Aorta (tissue), 5 donors: ENCODE measurements at regions of chr19 and their contacts with region 1.

Region 1: DNA sequence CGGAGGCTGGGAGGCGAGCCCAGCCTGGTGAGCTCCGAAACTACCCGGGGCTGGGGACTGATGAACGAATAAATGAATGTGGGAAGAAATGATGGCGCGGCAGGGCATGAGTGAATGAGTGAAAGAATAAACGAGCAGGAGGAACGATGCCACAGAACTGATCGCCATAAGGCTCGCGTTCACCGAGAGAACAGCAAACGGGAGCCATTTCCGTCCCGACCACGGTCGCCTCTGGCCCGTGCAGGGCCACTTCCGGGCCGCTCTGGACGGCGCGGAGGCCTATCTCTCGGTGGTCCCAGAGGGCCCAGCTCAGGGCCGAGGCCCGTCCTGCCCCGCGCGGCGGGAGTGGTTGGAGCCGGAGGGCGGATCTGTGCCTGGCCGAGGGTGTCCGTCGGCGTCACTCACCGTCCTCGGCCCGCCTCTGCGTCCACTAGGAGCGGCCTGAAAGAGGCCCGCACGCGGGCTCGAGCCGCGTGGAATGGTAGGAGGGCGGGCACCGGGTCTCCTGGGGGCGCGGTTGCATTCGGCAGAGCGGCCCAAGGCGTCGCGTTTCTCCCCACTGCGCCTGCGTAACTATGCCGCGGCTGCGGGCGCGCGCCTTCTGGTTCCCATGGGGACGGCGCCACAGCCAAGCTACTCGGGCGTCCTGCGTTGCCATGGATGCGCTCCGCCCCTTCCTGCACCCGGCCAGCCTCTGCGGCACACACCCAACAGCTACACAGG is at the start of gene ZNF497:
- DNase-seq: peak; percentile 98 to 99
- ATAC-seq: peak; percentile 97
- H3K4me3 ChIP-seq: peak within 1 kb of the TSS; percentile 42 to 67
- H3K27ac ChIP-seq: peak within 1 kb of the TSS in 1 of 2 donors; percentile 84
- H3K4me1 ChIP-seq: no peaks in the 10 kb centered on the region
- H3K27me3 ChIP-seq: no peaks in the 10 kb centered on the region
- total RNA-seq, gene ZNF497: 0.32 to 0.87 TPM

Region 2: DNA sequence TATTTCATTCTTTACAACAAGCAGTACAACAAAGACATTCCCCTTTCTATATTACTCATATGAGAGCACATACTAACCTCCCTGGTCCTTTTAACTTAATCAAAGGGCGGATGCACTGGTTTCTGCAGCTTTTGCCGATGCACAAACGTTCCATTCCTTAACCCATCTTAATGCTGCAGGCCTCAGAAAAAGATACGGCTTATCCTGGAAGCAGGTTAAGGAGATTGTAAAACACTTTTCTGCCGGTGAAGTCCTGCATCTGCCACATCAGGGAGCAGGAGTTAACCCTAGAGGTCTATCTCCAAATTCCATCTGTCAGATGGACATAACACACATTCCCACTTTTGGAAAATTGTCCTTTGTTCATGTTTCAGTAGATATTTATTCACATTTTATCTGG is 462.1 kb before region 1 on chr19:
- intact Hi-C with region 1: no loop called
- DNase-seq: no peak
- ATAC-seq: no peak
- H3K4me3 ChIP-seq: no peak overlapping the region
- H3K27ac ChIP-seq: no peak overlapping the region
- H3K4me1 ChIP-seq: no peaks in the 10 kb centered on the region
- H3K27me3 ChIP-seq: no peaks in the 10 kb centered on the region

Region 3: GRCh38 chr19:58380722-58381466 is 18.5 kb after region 1 on chr19 and contains the start of gene ZNF837:
- intact Hi-C with region 1: loop called in 1 of 2 experiments (anchors 1 kb)
- DNase-seq: peak; percentile 99 to 100
- ATAC-seq: peak; percentile 98
- H3K4me3 ChIP-seq: peak within 1 kb of the TSS; percentile 44 to 45
- H3K27ac ChIP-seq: peak within 1 kb of the TSS in 1 of 2 donors; percentile 91
- H3K4me1 ChIP-seq: peaks cover 0 to 3% of the 10 kb centered on the region in 2 donors
- H3K27me3 ChIP-seq: no peaks in the 10 kb centered on the region
- total RNA-seq, gene ZNF837: 0.65 to 1.8 TPM

Region 4: DNA sequence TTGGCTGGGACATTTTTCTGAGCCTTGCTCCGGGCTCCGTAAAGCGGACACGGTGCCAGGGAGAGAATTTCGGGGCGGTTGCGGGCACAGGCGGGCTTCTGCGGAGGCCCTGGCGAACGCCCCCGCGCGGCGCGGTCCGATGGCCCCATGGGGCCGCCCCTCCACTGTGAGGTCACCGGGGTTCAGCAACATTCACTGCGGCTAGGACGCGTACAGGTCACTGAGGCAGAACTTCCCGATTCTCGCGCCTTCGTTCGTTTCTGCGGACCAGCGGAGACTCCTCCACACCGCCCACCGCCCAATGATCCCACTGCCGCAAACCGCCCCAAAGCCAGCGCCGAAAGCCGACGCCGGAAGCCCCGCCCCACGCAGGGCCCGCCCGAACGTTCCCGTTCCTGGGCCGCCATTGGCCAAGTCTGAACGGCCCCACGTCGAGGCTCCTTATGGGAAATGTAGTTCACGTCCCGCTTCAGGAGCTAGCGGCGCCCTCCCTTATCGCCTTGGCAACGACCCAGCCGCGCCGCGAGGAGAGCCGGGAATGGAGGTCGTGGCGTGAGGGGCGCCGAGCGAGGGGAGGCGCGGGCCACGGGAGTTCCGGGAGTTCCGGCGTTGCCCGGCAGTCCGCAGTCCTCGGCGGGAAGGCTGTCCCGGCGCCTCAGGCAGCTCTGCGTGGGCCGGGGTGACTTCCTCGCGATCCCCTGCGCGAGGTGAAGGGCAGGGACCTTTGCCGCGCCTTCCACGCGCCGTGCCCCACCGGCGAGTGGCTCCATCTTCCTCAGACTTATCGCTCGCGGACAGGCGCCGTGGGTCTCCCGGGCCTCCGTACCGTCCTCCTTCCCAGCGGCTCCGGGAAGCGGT is 45.9 kb after region 1 on chr19 and contains the start of gene ZNF584:
- intact Hi-C with region 1: no loop called
- DNase-seq: peak; percentile 97 to 98
- ATAC-seq: peak; percentile 99
- H3K4me3 ChIP-seq: peak within 1 kb of the TSS; percentile 79 to 80
- H3K27ac ChIP-seq: peak within 1 kb of the TSS in 1 of 2 donors; percentile 87
- H3K4me1 ChIP-seq: no peaks in the 10 kb centered on the region
- H3K27me3 ChIP-seq: no peaks in the 10 kb centered on the region
- total RNA-seq, gene ZNF584: 11.8 to 13.4 TPM